Astrocyte of the cerebellum (primary cell): ENCODE measurements at regions of chr1 and their contacts with region 1.

Region 1: DNA sequence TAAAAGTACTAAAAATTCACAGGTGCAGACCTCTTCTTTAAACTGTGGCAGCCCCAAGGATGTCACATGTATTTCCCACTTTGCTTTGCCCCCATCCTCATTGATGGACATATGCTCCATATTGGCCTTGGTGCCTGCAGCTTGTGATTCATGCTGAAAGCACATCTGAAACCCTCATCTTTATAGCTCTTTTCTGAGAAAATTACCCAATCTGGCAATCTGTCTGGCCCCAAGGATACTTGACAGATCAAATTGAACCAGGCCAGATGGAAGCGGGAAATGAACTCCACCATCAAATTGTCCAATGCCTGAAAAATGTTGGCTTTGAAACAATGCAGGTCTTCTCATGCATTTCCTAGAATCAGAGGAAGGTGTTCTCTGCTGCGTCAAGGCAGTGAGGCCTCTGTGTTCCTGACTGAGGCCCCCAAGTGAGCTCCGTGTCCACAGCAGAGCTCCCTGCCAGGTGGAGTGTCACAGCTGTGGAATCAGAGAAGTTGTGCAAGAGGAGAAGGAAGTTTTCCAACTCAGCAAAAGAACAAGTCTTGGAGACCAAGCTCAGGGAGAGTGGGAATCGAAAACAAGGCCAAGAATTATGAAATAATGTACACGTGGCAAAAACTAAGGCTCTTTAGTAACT is 323.7 kb downstream of the PLPP3 start:
- DNase-seq: peak; percentile 2
- H3K4me3 ChIP-seq: no peak overlapping the region
- CTCF ChIP-seq: no peak

Region 2: DNA sequence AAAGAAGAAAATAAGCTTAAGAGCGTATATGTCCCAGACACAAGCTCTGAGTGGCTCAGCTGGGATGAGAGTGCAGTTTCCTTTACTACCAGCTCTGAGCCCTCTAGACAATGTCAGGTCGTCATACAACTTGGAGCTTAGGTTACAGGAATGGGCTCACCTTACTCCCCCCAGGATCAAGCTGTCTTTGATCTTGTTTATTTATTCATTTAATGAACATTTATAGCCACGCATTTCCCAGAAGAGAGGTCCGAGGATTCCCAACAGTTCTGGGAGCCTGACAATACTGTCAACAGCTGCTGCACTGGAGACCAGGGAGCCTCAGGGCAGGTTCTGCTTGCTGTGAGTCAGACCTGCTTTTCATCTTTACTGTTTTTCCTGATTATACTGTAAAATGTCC is 55.2 kb before region 1 on chr1:
- in situ Hi-C with region 1: loop called (anchors 5 kb)
- DNase-seq: no peak
- H3K4me3 ChIP-seq: no peak overlapping the region
- CTCF ChIP-seq: no peak